GM12878 (cell line): ENCODE measurements at regions of chr9 and their contacts with region 1.

Region 1: DNA sequence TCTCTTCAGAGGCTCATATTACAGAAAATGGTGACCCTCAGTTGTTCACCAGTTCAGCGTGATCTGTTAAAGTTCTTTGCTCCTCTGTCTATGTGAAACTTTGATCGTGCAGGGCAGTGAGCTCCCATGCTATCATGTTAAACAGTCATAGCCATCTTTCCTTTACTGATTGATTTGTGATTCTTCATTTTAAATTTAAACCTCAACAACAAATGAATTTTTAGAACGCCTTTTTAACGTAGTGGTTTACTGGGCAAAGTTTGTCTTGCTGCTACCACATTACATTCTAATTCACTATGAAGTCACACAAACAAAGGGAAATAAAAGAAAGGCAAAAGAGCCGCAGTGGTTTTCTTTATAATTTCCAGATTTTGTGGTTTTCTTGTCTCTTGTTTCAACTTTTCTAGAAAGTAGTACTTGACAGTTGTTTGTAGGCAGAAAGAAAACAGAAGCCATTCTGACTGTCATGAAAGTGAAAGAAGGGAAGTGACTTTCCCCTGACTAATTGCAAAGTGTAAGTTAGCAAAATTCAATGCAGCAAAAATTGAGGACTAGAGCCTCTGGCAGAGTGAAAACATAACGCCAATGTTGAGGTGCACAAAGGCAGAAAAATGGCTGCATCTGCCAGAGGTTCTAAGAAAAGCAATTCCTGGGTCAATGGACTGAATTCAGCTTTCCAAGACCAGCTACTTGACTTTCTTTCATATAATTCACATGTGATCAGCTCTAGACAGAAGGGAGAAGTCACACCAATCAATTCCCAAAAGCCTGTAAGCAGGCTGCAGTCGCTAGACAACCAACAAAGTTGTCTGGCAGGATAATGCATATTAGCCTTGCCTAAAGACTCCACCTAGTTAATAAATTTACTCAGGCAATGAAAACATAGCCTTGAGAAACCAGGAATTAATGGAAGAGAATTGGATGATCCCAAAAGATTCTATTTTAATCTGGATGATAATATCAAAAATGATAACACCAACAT is 7.1 kb upstream of the IFNA6 start:
- DNase-seq: peak; percentile 76
- ATAC-seq: peak; percentile 94
- H3K4me3 ChIP-seq: no peak overlapping the region
- H3K27ac ChIP-seq: peak overlapping the region; percentile 45; the same call in 1 of the 2 replicates
- H3K4me1 ChIP-seq: peaks cover 18% of the 10 kb centered on the region; the same call in 1 of the 2 replicates
- H3K27me3 ChIP-seq: no peaks in the 10 kb centered on the region
- CTCF ChIP-seq: no peak
- EP300 ChIP-seq: peak in 1 of 2 experiments; percentile 62; a peak in 1 of 4 replicates
- POLR2A ChIP-seq: no peak
- RAD21 ChIP-seq: no peak

Region 2: GRCh38 chr9:21340735-21341134 is 17.0 kb before region 1 on chr9:
- CTCF ChIA-PET with region 1: interaction called, 4 read pairs
- POLR2A ChIA-PET with region 1: no interaction called
- RAD21 ChIA-PET with region 1: interaction called, 22 read pairs
- SMC1A ChIA-PET with region 1: interaction called, 31 read pairs
- in situ Hi-C with region 1: no loop called
- intact Hi-C with region 1: loop called (anchors 2 kb)
- DNase-seq: no peak
- ATAC-seq: peak; percentile 63
- H3K4me3 ChIP-seq: no peak overlapping the region
- H3K27ac ChIP-seq: no peak overlapping the region
- H3K4me1 ChIP-seq: no peaks in the 10 kb centered on the region
- H3K27me3 ChIP-seq: no peaks in the 10 kb centered on the region
- CTCF ChIP-seq: no peak
- EP300 ChIP-seq: no peak
- POLR2A ChIP-seq: no peak
- RAD21 ChIP-seq: no peak